Naive thymus-derived CD4-positive, alpha-beta T cell (primary cell): ENCODE measurements at regions of chr1 and their contacts with region 1.

Region 1: GRCh38 chr1:35557292-35558063 is at the starts of genes KIAA0319L and NCDN:
- DNase-seq: peak; percentile 86 to 96 (median 94)
- ATAC-seq: peak; percentile 96
- H3K4me3 ChIP-seq: peak within 1 kb of the TSS; percentile 87
- H3K4me3 Mint-ChIP-seq: peak within 1 kb of the TSS; percentile 90 to 99 (median 96)
- H3K27ac ChIP-seq: peak within 1 kb of the TSS; percentile 77
- H3K27ac Mint-ChIP-seq: peak within 1 kb of the TSS; percentile 89 to 98 (median 93)
- H3K4me1 ChIP-seq: peaks cover 16 to 19% of the 10 kb centered on the region in 2 donors
- H3K4me1 Mint-ChIP-seq: peaks cover 40 to 69% (median 53%) of the 10 kb centered on the region in 7 donors
- H3K27me3 ChIP-seq: no peaks in the 10 kb centered on the region
- H3K27me3 Mint-ChIP-seq: no peaks in the 10 kb centered on the region
- total RNA-seq, gene KIAA0319L: 62.0 to 79.7 (median 65.6) TPM
- total RNA-seq, gene NCDN: 19.4 to 38.6 (median 26.4) TPM

Region 2: DNA sequence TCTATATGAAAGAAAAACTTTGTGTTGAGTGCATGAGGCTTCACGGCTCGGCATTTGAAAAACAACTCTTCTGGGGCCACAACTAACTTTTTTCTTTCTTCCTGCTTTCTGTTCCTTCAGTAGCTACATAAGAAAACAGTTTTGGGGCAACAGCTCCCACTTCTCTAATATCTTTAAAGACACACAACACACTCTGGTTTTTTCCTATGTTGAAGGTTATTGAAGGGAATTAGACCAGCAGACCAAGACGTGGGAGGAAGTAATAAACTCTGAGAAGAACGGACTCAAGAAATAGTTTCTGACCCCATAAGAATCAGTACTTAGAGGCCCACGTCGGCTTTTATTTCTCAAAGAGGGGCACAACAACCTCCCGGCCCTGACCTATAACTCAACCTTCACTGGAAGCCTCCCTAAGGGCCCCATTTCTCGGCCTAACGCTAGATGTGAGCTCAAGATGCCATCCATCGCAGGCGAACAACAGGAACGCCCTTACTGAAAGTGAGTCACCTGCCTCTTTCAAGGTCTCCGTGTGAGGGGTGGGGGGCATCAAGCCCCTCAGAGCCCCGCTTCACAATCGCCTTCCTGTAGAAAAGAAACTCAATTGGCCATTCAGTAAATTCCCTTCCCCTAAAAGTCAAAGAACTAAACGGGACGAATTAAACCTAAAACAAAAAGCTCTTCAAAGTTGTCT is 526.6 kb before region 1 on chr1:
- CTCF ChIA-PET with region 1: no interaction called
- POLR2A ChIA-PET with region 1: no interaction called
- intact Hi-C with region 1: loop called in 1 of 2 experiments (anchors 1 kb)
- DNase-seq: peak in 5 of 9 donors; percentile 4 to 42 (median 7)
- ATAC-seq: peak; percentile 36
- H3K4me3 ChIP-seq: peak overlapping the region; percentile 100
- H3K4me3 Mint-ChIP-seq: peak overlapping the region; percentile 87 to 100 (median 98)
- H3K27ac ChIP-seq: peak overlapping the region; percentile 82
- H3K27ac Mint-ChIP-seq: peak overlapping the region; percentile 92 to 99 (median 97)
- H3K4me1 ChIP-seq: peaks cover 15 to 17% of the 10 kb centered on the region in 2 donors
- H3K4me1 Mint-ChIP-seq: peaks cover 24 to 53% (median 43%) of the 10 kb centered on the region in 7 donors
- H3K27me3 ChIP-seq: no peaks in the 10 kb centered on the region
- H3K27me3 Mint-ChIP-seq: peaks cover 0 to 2% (median 0%) of the 10 kb centered on the region in 5 donors

Region 3: DNA sequence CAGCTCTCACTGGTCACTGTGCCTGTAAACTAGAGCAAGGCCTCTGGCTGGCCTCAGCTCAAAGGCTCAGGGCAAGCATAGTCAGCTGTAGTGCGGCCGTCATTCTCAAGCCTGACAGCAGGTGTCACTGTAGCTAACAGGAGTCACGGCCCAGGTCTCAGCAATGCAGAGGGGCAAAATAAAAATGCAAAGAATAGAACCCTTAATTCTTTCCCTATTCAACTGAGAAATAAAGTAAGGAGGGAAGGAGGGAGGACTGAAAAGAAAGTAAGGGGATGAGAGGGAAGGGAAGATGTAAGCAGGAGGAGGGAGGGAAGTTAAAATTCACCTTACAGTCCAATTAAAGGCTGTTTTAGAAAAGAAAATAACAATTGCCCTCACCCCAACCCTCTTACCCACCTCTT is 106.4 kb before region 1 on chr1:
- CTCF ChIA-PET with region 1: interaction called, 47 read pairs
- POLR2A ChIA-PET with region 1: interaction called, 21 read pairs
- intact Hi-C with region 1: no loop called
- DNase-seq: peak; percentile 44 to 79 (median 68)
- ATAC-seq: peak; percentile 89
- H3K4me3 ChIP-seq: no peak overlapping the region
- H3K4me3 Mint-ChIP-seq: peak overlapping the region in 9 of 10 donors; percentile 14 to 86 (median 55)
- H3K27ac ChIP-seq: peak overlapping the region; percentile 34
- H3K27ac Mint-ChIP-seq: peak overlapping the region; percentile 31 to 94 (median 77)
- H3K4me1 ChIP-seq: peaks cover 12 to 19% of the 10 kb centered on the region in 2 donors
- H3K4me1 Mint-ChIP-seq: peaks cover 24 to 38% (median 31%) of the 10 kb centered on the region in 7 donors
- H3K27me3 ChIP-seq: no peaks in the 10 kb centered on the region
- H3K27me3 Mint-ChIP-seq: no peaks in the 10 kb centered on the region

Region 4: GRCh38 chr1:35544978-35545377 is 12.5 kb before region 1 on chr1:
- CTCF ChIA-PET with region 1: interaction called, 3 read pairs
- POLR2A ChIA-PET with region 1: interaction called, 19 read pairs
- intact Hi-C with region 1: no loop called
- DNase-seq: peak in 6 of 9 donors; percentile 34 to 69 (median 58)
- ATAC-seq: peak; percentile 90
- H3K4me3 ChIP-seq: no peak overlapping the region
- H3K4me3 Mint-ChIP-seq: peak overlapping the region in 4 of 10 donors; percentile 0 to 26 (median 16)
- H3K27ac ChIP-seq: peak overlapping the region; percentile 12
- H3K27ac Mint-ChIP-seq: peak overlapping the region in 7 of 9 donors; percentile 3 to 93 (median 67)
- H3K4me1 ChIP-seq: peaks cover 10 to 13% of the 10 kb centered on the region in 2 donors
- H3K4me1 Mint-ChIP-seq: peaks cover 49 to 89% (median 78%) of the 10 kb centered on the region in 7 donors
- H3K27me3 ChIP-seq: no peaks in the 10 kb centered on the region
- H3K27me3 Mint-ChIP-seq: no peaks in the 10 kb centered on the region

Region 5: GRCh38 chr1:35715568-35716002 is 158.1 kb after region 1 on chr1:
- CTCF ChIA-PET with region 1: interaction called, 5 read pairs
- POLR2A ChIA-PET with region 1: no interaction called
- intact Hi-C with region 1: loop called in 1 of 2 experiments (anchors 1 kb)
- DNase-seq: peak; percentile 44 to 79 (median 66)
- ATAC-seq: peak; percentile 82
- H3K4me3 ChIP-seq: no peak overlapping the region
- H3K4me3 Mint-ChIP-seq: peak overlapping the region in 6 of 10 donors; percentile 0 to 53 (median 44)
- H3K27ac ChIP-seq: no peak overlapping the region
- H3K27ac Mint-ChIP-seq: peak overlapping the region in 3 of 9 donors; percentile 3 to 73 (median 59)
- H3K4me1 ChIP-seq: peaks cover 15 to 35% of the 10 kb centered on the region in 2 donors
- H3K4me1 Mint-ChIP-seq: peaks cover 26 to 34% (median 33%) of the 10 kb centered on the region in 7 donors
- H3K27me3 ChIP-seq: no peaks in the 10 kb centered on the region
- H3K27me3 Mint-ChIP-seq: no peaks in the 10 kb centered on the region

Region 6: DNA sequence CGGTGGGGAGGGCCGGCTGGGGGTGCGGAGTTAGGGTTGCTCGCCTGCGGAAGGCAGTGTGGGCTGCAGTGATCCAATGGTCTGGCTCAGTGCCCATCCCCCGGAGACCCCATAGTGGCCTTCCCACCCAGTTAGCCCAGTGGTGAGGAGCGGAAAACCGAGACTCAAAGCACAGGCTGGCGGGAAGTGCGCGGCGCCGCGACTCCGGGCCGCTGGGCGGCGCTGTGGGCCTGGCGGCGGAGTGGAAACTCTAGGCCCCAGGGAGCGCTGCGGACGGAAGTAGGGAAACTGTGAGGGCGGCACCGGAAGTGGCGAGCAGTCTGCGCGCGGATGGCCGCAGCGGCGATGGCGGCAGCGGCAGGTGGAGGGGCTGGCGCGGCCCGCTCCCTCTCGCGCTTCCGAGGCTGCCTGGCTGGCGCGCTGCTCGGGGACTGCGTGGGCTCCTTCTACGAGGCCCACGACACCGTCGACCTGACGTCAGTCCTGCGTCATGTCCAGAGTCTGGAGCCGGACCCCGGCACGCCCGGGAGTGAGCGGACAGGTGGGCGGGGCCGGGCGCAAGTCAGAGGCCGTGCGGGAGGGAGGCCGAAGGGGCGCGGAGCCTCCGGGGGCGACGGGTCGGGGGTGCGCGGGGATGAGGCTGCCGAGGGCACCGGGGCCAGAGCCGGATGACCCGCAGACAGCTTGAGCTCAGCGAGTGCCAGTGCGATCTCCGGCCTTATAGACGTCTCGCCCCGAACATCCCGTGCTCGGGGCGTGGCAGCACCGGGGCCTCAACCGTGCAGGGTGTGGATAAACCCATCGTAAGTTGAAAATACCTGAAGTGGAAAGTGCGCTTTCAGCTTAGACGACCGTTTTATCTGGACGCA is 531.3 kb after region 1 on chr1 and contains the start of gene ADPRS:
- CTCF ChIA-PET with region 1: no interaction called
- POLR2A ChIA-PET with region 1: no interaction called
- intact Hi-C with region 1: loop called in 1 of 2 experiments (anchors 5 kb)
- DNase-seq: peak; percentile 81 to 95 (median 88)
- ATAC-seq: peak; percentile 98
- H3K4me3 ChIP-seq: peak within 1 kb of the TSS; percentile 47
- H3K4me3 Mint-ChIP-seq: peak within 1 kb of the TSS; percentile 83 to 96 (median 93)
- H3K27ac ChIP-seq: peak within 1 kb of the TSS; percentile 98
- H3K27ac Mint-ChIP-seq: peak within 1 kb of the TSS; percentile 86 to 97 (median 90)
- H3K4me1 ChIP-seq: peaks cover 11 to 16% of the 10 kb centered on the region in 2 donors
- H3K4me1 Mint-ChIP-seq: peaks cover 12 to 30% (median 23%) of the 10 kb centered on the region in 7 donors
- H3K27me3 ChIP-seq: peaks cover 0 to 5% of the 10 kb centered on the region in 2 donors
- H3K27me3 Mint-ChIP-seq: peaks cover 10 to 18% (median 10%) of the 10 kb centered on the region in 5 donors
- total RNA-seq, gene ADPRS: 18.0 to 30.2 (median 24.2) TPM